ENCODE measurements at regions of chr1 and their contacts with region 1.

Region 1: DNA sequence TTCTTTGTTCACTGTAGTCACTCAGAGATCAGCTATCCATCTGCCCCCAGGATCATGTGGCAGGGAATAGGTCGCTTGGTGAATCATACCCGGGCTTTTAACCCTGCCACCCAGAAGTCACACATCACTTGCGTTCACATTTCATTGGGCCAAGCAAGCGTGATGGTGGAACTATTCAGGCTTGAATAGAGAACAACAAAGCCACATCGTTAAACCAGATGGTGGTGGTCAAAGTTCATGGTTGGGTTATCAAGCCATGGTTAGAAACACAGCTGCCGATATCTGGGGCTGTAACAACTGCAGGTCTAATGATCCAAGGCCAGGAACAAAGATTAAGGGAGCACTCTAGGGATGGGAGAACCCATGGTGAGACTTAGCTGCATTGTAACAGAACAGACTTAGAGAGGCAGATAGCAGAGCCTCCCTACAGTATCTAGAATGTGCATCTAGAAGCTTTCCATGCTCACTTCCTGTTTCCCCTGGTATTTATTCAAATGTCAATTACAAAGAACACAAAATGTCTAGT is 40.0 kb upstream of the PTPRC start:
- DNase-seq: peak in 1 of 14 experiments; percentile 26
- ATAC-seq: peak; percentile 58
- H3K4me3 ChIP-seq: no peak overlapping the region
- H3K4me3 Mint-ChIP-seq: peak overlapping the region; percentile 77
- H3K27ac ChIP-seq: peak overlapping the region in 1 of 2 donors; percentile 29
- H3K27ac Mint-ChIP-seq: peak overlapping the region; percentile 91
- H3K4me1 ChIP-seq: peaks cover 27% of the 10 kb centered on the region
- H3K4me1 Mint-ChIP-seq: peaks cover 93% of the 10 kb centered on the region
- H3K27me3 ChIP-seq: no peaks in the 10 kb centered on the region
- H3K27me3 Mint-ChIP-seq: no peaks in the 10 kb centered on the region
- CTCF ChIP-seq: no peak

Region 2: GRCh38 chr1:198543670-198544260 is 55.1 kb before region 1 on chr1:
- CTCF ChIA-PET with region 1: no interaction called
- POLR2A ChIA-PET with region 1: no interaction called
- intact Hi-C with region 1: no loop called
- DNase-seq: no peak
- ATAC-seq: no peak
- H3K4me3 ChIP-seq: no peak overlapping the region
- H3K4me3 Mint-ChIP-seq: no peak overlapping the region
- H3K27ac ChIP-seq: no peak overlapping the region
- H3K27ac Mint-ChIP-seq: peak overlapping the region; percentile 5
- H3K4me1 ChIP-seq: peaks cover 4% of the 10 kb centered on the region
- H3K4me1 Mint-ChIP-seq: peaks cover 48% of the 10 kb centered on the region
- H3K27me3 ChIP-seq: no peaks in the 10 kb centered on the region
- H3K27me3 Mint-ChIP-seq: no peaks in the 10 kb centered on the region
- CTCF ChIP-seq: no peak

Region 3: DNA sequence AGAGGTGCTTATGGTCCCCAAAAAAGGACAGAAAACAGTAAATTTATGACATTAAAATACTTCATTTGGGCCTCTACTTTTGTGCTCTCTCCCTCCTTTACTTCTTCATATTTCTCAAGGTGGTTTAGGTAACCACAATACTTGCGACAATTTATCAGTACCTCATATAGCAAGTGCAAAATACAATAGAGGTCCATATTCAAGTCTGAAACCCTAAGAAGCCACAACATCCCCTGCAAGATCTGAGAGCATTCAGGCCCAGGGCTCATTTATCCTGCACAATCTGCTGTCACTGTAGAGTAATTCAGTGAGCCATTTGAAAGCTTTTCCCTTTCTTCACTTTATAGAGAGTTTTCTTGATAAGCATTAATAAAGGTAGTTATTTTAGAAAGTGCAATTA is 34.1 kb before region 1 on chr1:
- CTCF ChIA-PET with region 1: no interaction called
- POLR2A ChIA-PET with region 1: interaction called, 3 read pairs
- intact Hi-C with region 1: loop called (anchors 5 kb)
- DNase-seq: peak in 5 of 14 experiments; percentile 8 to 67 (median 42)
- ATAC-seq: peak; percentile 83
- H3K4me3 ChIP-seq: no peak overlapping the region
- H3K4me3 Mint-ChIP-seq: peak overlapping the region; percentile 17
- H3K27ac ChIP-seq: peak overlapping the region in 1 of 2 donors; percentile 10
- H3K27ac Mint-ChIP-seq: peak overlapping the region; percentile 51
- H3K4me1 ChIP-seq: peaks cover 10% of the 10 kb centered on the region
- H3K4me1 Mint-ChIP-seq: peaks cover 68% of the 10 kb centered on the region
- H3K27me3 ChIP-seq: no peaks in the 10 kb centered on the region
- H3K27me3 Mint-ChIP-seq: no peaks in the 10 kb centered on the region
- CTCF ChIP-seq: no peak

Region 4: GRCh38 chr1:198612471-198613260 is 13.8 kb after region 1 on chr1:
- CTCF ChIA-PET with region 1: interaction called, 4 read pairs
- POLR2A ChIA-PET with region 1: interaction called, 26 read pairs
- intact Hi-C with region 1: loop called in 1 of 2 experiments (anchors 2 kb)
- DNase-seq: peak in 3 of 14 experiments; percentile 57 to 78 (median 60)
- ATAC-seq: peak; percentile 45
- H3K4me3 ChIP-seq: peak overlapping the region; percentile 28
- H3K4me3 Mint-ChIP-seq: peak overlapping the region; percentile 79
- H3K27ac ChIP-seq: peak overlapping the region; percentile 71
- H3K27ac Mint-ChIP-seq: peak overlapping the region; percentile 98
- H3K4me1 ChIP-seq: peaks cover 50% of the 10 kb centered on the region
- H3K4me1 Mint-ChIP-seq: peaks cover 70% of the 10 kb centered on the region
- H3K27me3 ChIP-seq: no peaks in the 10 kb centered on the region
- H3K27me3 Mint-ChIP-seq: no peaks in the 10 kb centered on the region
- CTCF ChIP-seq: no peak

Measured in CD4-positive, alpha-beta T cell (primary cell).